ENCODE measurements at regions of chr17 and their contacts with region 1.

Region 1: GRCh38 chr17:65556014-65556909 is 5.2 kb downstream of the AXIN2 start:
- DNase-seq: peak; percentile 91
- H3K4me3 Mint-ChIP-seq: no peak overlapping the region
- H3K27ac Mint-ChIP-seq: no peak overlapping the region
- H3K4me1 Mint-ChIP-seq: peaks cover 27% of the 10 kb centered on the region
- H3K27me3 Mint-ChIP-seq: no peaks in the 10 kb centered on the region

Region 2: DNA sequence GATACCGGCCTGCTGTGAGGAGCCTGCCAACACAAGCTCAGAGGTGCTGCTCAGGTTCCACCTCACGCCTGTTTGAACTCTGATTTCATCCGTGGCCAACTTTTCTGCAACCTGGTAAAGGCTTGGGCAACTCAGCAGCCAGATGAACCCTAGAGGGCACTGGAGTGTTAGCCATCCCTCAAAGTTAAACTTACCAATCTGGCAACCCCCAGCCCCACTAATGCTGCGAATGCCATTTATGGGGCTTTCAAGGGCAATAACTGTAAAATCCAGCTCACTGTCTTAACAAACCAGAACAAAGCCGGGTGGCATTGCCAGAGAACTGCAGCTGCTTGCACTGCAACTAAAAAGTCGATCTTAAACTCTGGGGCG is 100.3 kb before region 1 on chr17:
- CTCF ChIA-PET with region 1: interaction called, 3 read pairs
- POLR2A ChIA-PET with region 1: no interaction called
- intact Hi-C with region 1: loop called (anchors 10 kb)
- DNase-seq: peak; percentile 27
- H3K4me3 Mint-ChIP-seq: no peak overlapping the region
- H3K27ac Mint-ChIP-seq: no peak overlapping the region
- H3K4me1 Mint-ChIP-seq: no peaks in the 10 kb centered on the region
- H3K27me3 Mint-ChIP-seq: no peaks in the 10 kb centered on the region

Region 3: DNA sequence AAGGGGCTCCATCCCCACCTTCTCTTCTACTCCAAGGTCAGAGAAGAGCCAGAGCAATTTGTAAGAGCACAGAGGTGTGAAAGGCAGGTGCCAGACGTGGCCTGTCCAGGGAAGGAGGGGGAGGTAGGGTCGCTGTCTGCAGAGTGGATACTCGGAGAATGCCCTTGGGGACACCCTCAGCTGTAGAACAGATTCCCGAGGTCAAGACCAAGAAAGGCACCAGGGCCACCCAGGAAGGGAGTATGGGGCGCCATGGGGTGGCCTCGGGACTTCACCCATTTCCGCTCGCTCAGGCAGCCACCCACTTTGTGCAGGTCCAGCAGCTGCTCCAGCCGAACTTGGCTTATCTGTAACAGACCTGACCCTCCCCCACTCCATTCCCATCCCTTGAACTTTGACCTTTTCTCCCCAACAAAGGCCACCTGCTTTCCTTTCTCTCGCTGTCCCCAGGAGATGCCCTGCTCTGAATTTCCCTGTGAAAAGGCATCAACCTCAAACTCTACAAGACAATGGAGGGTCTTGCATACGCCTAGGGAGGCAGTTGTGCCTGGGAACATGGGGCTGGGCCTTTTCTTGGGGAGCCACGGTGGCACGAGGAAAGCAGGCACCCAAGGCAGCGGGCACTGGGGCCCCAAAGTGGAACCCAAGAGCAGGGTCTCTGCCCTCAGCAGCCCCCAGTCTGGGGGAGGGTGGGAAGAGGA is 16.5 kb after region 1 on chr17:
- CTCF ChIA-PET with region 1: no interaction called
- POLR2A ChIA-PET with region 1: no interaction called
- intact Hi-C with region 1: no loop called
- DNase-seq: no peak
- H3K4me3 Mint-ChIP-seq: no peak overlapping the region
- H3K27ac Mint-ChIP-seq: no peak overlapping the region
- H3K4me1 Mint-ChIP-seq: no peaks in the 10 kb centered on the region
- H3K27me3 Mint-ChIP-seq: peaks cover 2% of the 10 kb centered on the region

Region 4: GRCh38 chr17:65584604-65585541 is 28.6 kb after region 1 on chr17:
- CTCF ChIA-PET with region 1: interaction called, 3 read pairs
- POLR2A ChIA-PET with region 1: interaction called, 3 read pairs
- intact Hi-C with region 1: loop called (anchors 2 kb)
- DNase-seq: no peak
- H3K4me3 Mint-ChIP-seq: no peak overlapping the region
- H3K27ac Mint-ChIP-seq: peak overlapping the region; percentile 63
- H3K4me1 Mint-ChIP-seq: peaks cover 15% of the 10 kb centered on the region
- H3K27me3 Mint-ChIP-seq: no peaks in the 10 kb centered on the region

Region 5: DNA sequence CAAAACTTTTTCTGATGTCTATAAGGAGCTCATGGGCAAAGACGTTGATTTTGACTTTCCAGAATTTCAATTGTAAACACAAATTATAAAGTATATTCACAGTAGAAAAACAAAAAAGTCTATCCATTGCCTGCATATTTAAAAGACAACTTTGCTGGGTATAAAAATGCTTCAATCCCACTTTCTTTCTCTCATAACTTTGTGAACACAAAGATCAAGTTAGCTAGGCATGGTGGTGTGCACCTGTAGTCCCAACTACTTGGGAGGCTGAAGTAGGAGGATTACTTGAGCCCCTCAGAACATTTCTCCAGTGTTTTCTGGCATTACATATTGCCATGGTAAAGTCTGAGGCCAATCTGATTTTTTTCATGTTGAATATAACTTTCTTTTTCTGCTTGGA is 88.3 kb after region 1 on chr17:
- CTCF ChIA-PET with region 1: no interaction called
- POLR2A ChIA-PET with region 1: no interaction called
- intact Hi-C with region 1: no loop called
- DNase-seq: no peak
- H3K4me3 Mint-ChIP-seq: no peak overlapping the region
- H3K27ac Mint-ChIP-seq: no peak overlapping the region
- H3K4me1 Mint-ChIP-seq: no peaks in the 10 kb centered on the region
- H3K27me3 Mint-ChIP-seq: no peaks in the 10 kb centered on the region

Region 6: DNA sequence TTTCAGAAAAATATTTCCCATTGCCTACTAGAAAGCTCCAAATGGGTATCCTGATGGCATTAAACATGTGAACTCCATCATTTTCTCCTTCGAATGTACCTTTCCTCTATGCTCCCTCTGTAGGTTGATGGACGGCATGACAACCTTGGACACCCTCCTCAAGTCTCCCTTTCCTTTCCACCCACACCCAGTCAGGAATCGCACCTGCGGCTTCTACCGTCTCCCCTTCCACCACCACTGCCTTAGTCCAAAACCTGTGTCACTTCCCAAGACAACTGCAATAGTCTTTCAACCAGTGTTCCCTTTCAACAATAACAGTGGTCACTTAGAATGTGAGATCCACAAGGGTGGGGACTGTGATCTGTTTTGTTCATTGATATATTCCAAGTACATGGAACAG is 238.3 kb after region 1 on chr17:
- CTCF ChIA-PET with region 1: interaction called, 4 read pairs
- POLR2A ChIA-PET with region 1: no interaction called
- intact Hi-C with region 1: loop called (anchors 1 kb)
- DNase-seq: no peak
- H3K4me3 Mint-ChIP-seq: no peak overlapping the region
- H3K27ac Mint-ChIP-seq: no peak overlapping the region
- H3K4me1 Mint-ChIP-seq: peaks cover 11% of the 10 kb centered on the region
- H3K27me3 Mint-ChIP-seq: no peaks in the 10 kb centered on the region

Measured in activated CD4-positive, alpha-beta memory T cell treated with anti-CD3 and anti-CD28 coated beads for 36 hours (primary cell).